ENCODE measurements at regions of chr15 and their contacts with region 1.

Region 1: GRCh38 chr15:74906446-74907162 is at the start of gene FAM219B:
- DNase-seq: peak; percentile 98

Region 2: GRCh38 chr15:74842581-74843444 is 63.8 kb before region 1 on chr15 and contains the start of gene ULK3:
- CTCF ChIA-PET with region 1: interaction called, 8 read pairs
- POLR2A ChIA-PET with region 1: interaction called, 25 read pairs
- DNase-seq: peak; percentile 98

Region 3: DNA sequence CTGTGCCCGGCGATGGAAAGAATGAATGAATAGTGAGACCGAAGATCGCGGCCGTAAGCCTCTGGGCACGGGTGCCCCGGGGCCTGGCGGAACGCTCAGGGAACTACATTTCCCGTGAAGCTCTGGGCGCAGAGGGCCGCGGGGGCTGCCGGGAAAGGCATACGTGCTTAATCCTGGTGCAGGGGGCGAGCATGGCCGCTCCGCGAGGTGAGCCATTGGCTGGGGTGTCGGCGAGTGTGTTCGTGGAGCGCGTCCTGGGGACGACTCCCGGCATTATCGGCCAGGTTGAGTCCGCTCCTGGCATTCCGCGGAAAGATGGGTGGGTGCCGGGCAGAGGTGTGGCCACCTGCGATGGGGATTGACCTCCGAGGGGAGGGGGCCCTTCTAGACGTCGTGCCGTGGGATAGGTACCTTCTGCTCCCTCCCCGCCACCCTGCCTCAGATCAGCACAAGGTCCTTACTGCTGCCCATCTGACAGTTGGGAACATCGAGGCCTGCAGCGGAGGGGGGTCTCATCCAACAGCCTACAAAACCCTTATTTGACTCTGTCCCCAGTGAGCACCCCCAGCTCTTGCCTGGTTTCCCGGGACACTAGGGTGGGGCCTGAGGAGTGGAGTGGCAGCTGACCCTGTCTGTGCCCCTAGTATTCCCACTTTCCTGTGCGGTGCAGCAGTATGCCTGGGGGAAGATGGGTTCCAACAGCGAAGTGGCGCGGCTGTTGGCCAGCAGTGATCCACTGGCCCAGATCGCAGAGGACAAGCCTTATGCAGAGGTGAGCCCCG is 16.5 kb before region 1 on chr15 and contains the start of gene MPI:
- CTCF ChIA-PET with region 1: interaction called, 13 read pairs
- POLR2A ChIA-PET with region 1: interaction called, 35 read pairs
- DNase-seq: peak; percentile 97

Region 4: DNA sequence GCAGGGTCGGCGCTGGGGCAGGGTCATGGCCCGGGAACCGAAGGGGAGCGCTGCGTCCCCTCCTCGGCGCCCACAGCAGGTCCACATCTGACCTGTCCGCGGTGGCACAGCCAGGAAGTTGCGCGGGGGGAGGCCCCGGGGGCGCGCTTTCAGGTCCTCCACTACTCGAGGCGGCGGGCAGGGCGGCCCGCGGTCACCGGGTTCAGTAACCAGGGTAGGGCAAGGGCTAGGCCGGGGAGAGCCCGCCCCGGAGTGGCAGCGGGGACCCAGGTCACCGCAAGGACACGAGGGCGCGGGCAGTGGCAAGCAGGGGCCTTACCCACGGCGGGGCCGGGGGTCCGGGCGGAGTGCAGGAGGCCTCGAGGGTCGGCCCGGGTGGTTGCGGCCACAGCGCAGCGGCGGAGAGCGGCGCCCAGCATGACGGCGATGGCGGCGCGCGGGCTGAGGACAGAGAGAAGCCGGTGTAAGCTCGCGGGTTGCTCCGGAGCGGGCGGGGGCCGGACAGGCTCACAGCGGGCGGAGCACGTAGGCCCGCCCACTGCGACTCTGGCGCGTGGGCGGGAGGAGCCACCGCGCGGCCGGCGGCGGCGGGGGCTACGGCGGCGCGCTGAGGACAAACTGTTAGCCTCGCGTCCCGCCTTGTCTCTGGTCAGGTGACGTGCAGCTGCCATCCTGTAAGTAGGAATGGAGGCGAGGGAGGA is 31.1 kb after region 1 on chr15 and contains the start of gene COX5A:
- CTCF ChIA-PET with region 1: interaction called, 3 read pairs
- POLR2A ChIA-PET with region 1: interaction called, 17 read pairs
- DNase-seq: peak; percentile 95

Region 5: GRCh38 chr15:74956648-74957300 is 50.2 kb after region 1 on chr15 and contains the start of gene RPP25:
- CTCF ChIA-PET with region 1: interaction called, 8 read pairs
- POLR2A ChIA-PET with region 1: interaction called, 24 read pairs
- DNase-seq: peak; percentile 88

Region 6: GRCh38 chr15:75554717-75555116 is 648.1 kb after region 1 on chr15:
- CTCF ChIA-PET with region 1: no interaction called
- POLR2A ChIA-PET with region 1: no interaction called
- DNase-seq: no peak